ENCODE measurements at regions of chr11 and their contacts with region 1.

Region 1: GRCh38 chr11:120682866-120683265 is 171.3 kb downstream of the GRIK4 start:
- DNase-seq: no peak
- CTCF ChIP-seq: no peak

Region 2: GRCh38 chr11:120471131-120471530 is 211.7 kb before region 1 on chr11:
- in situ Hi-C with region 1: no loop called
- DNase-seq: no peak
- CTCF ChIP-seq: no peak

Region 3: DNA sequence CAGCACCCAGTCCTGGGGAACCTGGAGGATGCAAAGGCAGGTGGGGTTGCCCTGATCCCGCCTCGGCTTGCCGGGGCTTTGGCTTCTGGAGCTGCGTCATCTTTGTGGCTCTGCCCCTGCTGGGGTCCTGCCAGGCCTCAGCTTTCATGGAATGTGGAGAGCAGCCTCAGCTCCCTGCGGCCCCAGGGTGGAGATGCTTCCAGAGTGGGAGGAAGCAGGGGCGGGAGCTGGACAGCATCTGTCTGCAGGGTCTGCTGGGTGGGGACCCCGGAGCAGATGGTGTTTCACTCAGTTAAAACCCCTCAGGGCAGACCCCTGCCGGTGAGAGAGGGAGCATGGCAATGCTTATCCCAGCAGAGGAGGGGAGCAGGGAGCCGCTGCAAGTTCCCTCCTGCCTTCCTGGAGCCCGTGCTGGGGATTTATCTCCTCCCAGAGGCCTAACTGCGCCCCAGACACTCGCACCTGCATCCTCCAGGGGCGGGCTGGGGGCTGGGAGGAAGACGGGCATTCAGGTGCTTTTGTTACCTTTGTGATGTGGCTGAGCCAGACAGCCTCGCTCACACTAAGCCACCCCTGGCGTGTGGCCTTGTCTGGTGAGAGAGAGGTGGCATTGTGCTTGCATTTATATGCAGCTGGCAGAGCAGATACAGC is 155.6 kb before region 1 on chr11:
- in situ Hi-C with region 1: loop called (anchors 10 kb)
- DNase-seq: no peak
- CTCF ChIP-seq: no peak